ENCODE measurements at regions of chr16 and their contacts with region 1.

Region 1: DNA sequence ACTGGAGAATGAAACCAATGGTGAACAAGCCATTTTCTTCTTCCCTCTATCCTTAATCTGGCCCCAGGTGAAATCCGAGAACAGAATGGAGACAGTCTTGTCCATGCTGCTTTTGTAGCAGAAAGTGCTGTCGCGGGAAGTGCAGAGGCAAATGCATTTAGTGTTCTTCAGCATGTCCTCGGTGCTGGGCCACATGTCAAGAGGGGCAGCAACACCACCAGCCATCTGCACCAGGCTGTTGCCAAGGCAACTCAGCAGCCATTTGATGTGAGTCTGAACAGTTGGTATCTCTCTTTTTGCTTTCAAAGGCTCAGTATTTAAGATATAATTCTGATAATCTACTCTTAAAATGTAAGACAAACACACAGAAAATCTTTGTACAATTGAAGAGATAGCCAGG is 18.7 kb downstream of the UQCRC2 start:
- DNase-seq: no peak
- ATAC-seq: no peak
- H3K4me3 ChIP-seq: no peak overlapping the region
- H3K27ac ChIP-seq: no peak overlapping the region
- H3K4me1 ChIP-seq: no peaks in the 10 kb centered on the region
- H3K27me3 ChIP-seq: no peaks in the 10 kb centered on the region
- CTCF ChIP-seq: no peak
- POLR2A ChIP-seq: no peak
- RAD21 ChIP-seq: no peak

Region 2: DNA sequence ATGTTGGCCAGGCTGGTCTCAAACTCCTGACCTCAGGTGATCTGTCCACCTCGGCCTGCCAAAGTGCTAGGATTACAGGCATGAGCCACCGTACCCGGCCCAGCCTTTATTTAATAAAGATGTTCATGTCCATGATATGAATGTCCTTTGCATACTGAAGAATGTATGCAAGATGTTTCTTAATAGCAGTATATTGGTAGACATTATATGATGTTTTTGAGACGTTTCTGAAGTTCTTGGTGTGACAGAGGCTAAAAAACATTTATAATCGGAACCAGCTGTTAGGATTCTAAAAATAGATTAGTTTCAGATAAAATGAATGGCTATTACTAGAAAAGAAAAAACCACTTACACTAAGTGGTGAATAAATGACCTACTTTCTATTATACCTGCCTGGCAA is 17.3 kb after region 1 on chr16:
- CTCF ChIA-PET with region 1: no interaction called
- POLR2A ChIA-PET with region 1: no interaction called
- dilution Hi-C with region 1: no loop called
- in situ Hi-C with region 1: no loop called
- intact Hi-C with region 1: loop called (anchors 2 kb)
- DNase-seq: peak; percentile 10
- ATAC-seq: no peak; the same call in 1 of the 2 replicates
- H3K4me3 ChIP-seq: no peak overlapping the region
- H3K27ac ChIP-seq: no peak overlapping the region
- H3K4me1 ChIP-seq: no peaks in the 10 kb centered on the region
- H3K27me3 ChIP-seq: no peaks in the 10 kb centered on the region
- CTCF ChIP-seq: no peak
- POLR2A ChIP-seq: no peak
- RAD21 ChIP-seq: no peak

Measured in IMR-90 (cell line).